ENCODE measurements at regions of chr3 and their contacts with region 1.

Region 1: DNA sequence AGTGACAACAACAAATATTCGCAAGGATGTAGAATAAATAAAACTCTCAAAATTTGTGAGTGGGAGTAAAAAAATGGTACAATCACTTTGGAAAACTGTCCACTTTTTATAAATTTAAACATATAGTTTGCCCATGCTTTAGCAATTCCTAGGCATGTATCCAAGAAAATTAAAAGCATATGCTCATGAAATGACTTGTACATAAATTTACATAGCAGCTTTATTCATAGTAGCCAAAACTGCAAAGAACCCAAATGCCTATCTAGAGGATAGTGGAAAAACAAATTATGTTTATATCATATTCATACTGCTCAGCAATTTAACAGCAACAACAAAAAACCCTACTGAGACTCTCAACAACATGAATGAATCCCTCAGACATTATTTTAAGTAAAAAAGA is 363.6 kb upstream of the CCDC54 start:
- DNase-seq: no peak
- ATAC-seq: no peak
- H3K4me3 ChIP-seq: no peak overlapping the region
- H3K27ac ChIP-seq: no peak overlapping the region
- H3K4me1 ChIP-seq: no peaks in the 10 kb centered on the region; the same call in 1 of the 2 replicates
- H3K27me3 ChIP-seq: no peaks in the 10 kb centered on the region
- CTCF ChIP-seq: no peak
- POLR2A ChIP-seq: no peak
- RAD21 ChIP-seq: no peak

Region 2: DNA sequence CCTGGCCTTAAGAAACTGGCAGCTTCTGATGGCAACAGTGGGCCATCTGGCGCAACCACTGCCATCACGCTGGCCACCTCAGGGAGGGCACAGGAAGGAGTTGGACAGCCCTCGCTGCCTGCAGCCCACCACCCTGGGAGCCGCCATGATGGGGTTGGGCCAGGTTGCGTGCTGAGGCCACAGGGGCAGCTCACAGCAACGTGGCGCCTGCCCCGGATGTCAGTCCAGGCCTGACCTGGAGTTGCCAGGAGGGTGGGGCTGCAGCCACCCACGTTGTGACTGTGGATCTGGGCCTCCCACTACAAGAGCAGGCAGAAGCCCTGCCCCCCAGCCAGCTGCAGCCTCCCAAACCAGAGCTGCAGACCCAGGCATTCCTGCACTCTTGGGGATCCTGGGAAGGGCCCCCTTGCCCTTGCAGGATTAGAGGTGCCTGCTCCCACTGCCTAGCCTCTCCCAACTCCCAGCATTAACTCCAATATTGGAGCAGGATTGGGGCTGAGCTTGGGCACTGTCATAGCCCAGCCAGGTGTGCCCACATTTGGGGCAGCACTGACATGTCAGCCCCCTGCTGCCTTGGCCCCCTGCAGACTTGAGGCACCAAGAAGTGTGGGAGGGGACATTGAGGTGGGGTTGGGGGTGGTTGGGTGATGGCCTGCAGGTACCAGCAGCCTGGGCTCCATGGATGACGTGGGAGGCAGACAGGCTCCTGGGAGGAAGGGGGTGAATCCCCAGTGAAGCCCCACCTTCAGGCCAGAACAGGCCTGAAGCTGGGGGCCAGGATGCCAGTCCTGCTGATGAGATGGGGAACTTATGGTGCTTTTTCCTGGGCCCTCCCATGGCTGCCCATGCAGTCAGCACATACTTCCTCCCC is 105.2 kb before region 1 on chr3:
- CTCF ChIA-PET with region 1: no interaction called
- POLR2A ChIA-PET with region 1: no interaction called
- dilution Hi-C with region 1: no loop called
- in situ Hi-C with region 1: no loop called
- intact Hi-C with region 1: loop called (anchors 10 kb)
- DNase-seq: no peak
- ATAC-seq: no peak
- H3K4me3 ChIP-seq: no peak overlapping the region
- H3K27ac ChIP-seq: no peak overlapping the region
- H3K4me1 ChIP-seq: no peaks in the 10 kb centered on the region
- H3K27me3 ChIP-seq: no peaks in the 10 kb centered on the region
- CTCF ChIP-seq: no peak
- POLR2A ChIP-seq: no peak
- RAD21 ChIP-seq: no peak